Activated T-helper 2 cell treated with anti-CD3 and anti-CD28 coated beads, Interferon-gamma antibody, Interleukin-2, Interleukin-4, amounts not matched to agents 10 μg/mL and 5 μg/mL and 100 μg/mL, durations not matched to agents 14 hours and 24 hours and 36 hours (primary cell): ENCODE measurements at regions of chr10 and their contacts with region 1.

Region 1: DNA sequence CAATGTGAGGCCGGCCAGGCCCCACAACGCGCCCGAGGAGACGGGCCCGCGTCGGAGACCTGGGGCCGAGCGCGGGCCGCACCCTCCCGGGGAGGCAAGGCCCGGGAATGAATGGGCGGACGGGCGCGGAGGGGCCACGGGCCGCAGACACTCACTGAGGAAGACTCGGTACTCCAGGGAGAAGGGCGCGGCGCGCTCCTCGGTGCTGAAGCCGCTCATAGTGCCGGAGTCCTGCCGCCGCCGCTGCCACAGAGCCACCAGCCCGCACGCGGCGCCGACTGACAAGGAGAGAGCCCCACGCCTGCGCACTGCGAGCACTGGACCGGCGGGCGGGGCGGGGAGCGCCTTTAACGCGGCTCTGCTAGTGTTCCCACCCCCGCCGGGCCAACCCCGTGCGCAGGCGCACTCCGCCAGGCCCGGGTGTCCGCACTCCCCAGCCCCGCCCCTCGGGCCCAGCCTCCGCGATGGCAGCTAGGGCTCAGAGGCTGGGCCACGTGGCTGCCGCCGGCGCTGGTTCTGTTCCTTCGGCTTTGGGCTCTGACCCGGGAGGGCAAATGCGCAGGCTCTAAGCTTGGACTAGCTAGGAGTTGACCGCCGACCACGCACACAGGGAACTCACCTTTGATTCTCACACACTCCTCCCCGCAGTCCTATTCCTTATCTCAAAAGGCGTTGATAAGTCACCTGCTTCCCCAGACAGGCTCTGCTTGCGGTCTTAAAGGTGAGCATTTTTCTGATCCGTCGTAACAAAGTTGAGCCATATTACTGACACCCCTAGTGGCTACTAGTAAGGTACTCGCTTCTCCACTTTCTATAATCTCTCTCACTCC is at the start of gene PPA1:
- DNase-seq: peak; percentile 98
- H3K4me3 Mint-ChIP-seq: peak within 1 kb of the TSS; percentile 88
- H3K27ac Mint-ChIP-seq: peak within 1 kb of the TSS; percentile 85
- H3K4me1 Mint-ChIP-seq: peaks cover 30% of the 10 kb centered on the region
- H3K27me3 Mint-ChIP-seq: no peaks in the 10 kb centered on the region
- total RNA-seq, gene PPA1: 405 and 419 TPM in 2 replicates

Region 2: DNA sequence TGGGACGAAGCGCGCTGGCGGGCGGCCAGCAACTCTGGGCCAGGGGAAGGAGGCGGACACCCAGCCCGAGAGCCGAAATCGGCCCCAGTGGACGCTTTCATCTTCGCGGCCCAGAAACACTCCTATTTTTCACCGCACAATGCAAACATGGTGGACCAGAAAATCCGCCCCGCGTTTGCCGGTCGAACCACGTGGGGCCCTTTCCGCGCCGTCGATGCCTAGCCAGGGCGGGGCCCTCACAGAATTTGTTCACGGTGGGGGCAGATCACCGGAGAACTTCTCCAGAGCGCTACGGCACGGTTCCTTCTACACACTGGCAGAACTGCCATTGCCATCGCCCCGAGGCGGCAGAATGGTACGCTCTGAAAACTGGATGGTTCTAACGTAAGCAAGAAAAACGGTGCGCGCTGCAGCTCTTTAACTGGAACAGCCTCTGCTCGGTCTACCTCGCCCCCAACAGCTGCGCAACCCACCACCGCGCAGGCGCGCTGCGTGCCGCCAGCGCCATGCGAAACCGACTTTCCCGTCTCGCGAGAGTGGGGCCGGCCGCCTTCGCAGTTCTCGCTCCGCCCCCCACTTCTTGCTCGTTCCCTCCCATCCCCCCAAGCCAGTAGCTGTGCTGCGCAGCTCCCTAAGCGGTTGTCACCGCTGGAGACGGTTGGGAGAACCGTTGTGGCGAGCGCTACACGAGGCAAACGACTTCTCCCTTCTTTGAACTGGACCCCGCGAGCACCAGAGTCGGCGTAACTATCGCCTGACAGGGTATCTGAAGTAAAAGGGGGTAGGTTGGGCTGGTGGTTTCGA is 1901.7 kb before region 1 on chr10 and contains the start of gene HNRNPH3:
- intact Hi-C with region 1: loop called (anchors 5 kb)
- DNase-seq: peak; percentile 98
- H3K4me3 Mint-ChIP-seq: peak within 1 kb of the TSS; percentile 99
- H3K27ac Mint-ChIP-seq: peak within 1 kb of the TSS; percentile 100
- H3K4me1 Mint-ChIP-seq: peaks cover 45% of the 10 kb centered on the region
- H3K27me3 Mint-ChIP-seq: no peaks in the 10 kb centered on the region
- total RNA-seq, gene HNRNPH3: 172 and 183 TPM in 2 replicates

Region 3: GRCh38 chr10:70162892-70163201 is 70.5 kb before region 1 on chr10:
- intact Hi-C with region 1: loop called (anchors 2 kb)
- DNase-seq: peak; percentile 68
- H3K4me3 Mint-ChIP-seq: peak overlapping the region; percentile 53
- H3K27ac Mint-ChIP-seq: peak overlapping the region; percentile 88
- H3K4me1 Mint-ChIP-seq: peaks cover 60% of the 10 kb centered on the region
- H3K27me3 Mint-ChIP-seq: no peaks in the 10 kb centered on the region

Region 4: DNA sequence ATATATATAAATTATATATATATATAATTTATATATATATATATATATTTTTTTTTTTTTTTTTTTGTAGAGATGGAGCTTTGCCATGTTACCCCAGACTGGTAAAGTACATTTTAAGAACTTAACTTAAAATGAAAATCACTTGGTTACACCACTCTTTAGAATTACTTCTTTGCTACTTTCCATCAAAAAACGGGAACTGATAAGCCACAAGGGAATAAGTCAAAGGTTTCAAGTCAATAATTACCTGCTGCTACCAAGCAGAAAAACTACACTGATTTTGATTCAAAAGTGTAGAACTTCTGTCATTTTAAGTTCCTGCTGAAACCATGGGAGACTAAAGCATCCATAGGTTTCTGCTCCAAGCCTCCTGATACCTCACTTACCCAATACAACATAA is 12.3 kb before region 1 on chr10:
- intact Hi-C with region 1: loop called (anchors 1 kb)
- DNase-seq: no peak
- H3K4me3 Mint-ChIP-seq: peak overlapping the region; percentile 60
- H3K27ac Mint-ChIP-seq: no peak overlapping the region
- H3K4me1 Mint-ChIP-seq: peaks cover 32% of the 10 kb centered on the region
- H3K27me3 Mint-ChIP-seq: no peaks in the 10 kb centered on the region

Region 5: DNA sequence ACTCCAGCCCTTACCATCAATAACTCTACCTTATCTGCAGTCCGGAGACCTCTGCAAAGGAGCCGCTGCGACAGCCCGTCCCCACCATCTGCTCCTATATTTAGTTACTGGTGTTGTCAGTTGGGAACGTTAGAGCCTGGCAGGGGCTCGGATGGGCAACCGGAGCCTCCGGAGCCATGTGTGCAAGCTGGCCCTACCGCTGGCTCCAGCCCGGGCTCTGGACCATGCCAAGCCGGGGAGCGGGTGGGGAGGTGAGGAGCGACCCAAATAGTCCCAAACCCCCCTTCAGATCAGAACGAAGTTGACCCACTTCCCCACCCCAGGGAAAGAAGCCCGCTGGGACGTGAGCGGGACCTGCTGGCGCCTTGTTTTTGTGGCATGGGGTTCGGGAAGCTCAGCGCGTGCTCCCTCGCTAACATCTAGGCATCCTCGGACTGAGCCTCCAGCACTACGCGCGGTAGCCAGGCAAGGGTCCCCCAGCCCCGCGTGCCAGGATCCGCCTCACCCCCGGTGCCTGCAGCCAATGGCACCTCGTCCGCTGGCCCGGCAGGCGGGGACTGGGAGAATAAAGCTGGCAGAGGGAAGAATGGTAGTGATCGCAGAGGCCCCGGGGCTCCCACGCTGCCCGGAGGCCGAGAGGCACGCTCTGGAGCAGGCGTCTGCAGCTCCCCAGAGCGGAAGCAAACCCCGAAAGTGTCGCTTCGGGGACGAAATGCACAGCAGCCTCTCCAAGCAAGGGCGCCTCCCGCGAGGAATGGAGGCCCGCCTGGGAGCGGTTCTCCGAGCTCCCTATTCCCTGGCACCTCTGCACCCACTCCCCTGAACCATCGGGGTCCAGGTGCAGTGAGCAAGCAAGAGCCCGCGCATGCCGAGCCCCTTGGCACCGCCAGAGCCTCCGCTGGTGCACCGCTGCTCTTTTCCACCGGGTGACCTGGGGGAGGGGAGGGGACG is 148.4 kb after region 1 on chr10:
- intact Hi-C with region 1: loop called (anchors 1 kb)
- DNase-seq: peak; percentile 40
- H3K4me3 Mint-ChIP-seq: peak overlapping the region; percentile 85
- H3K27ac Mint-ChIP-seq: no peak overlapping the region
- H3K4me1 Mint-ChIP-seq: peaks cover 14% of the 10 kb centered on the region
- H3K27me3 Mint-ChIP-seq: no peaks in the 10 kb centered on the region

Region 6: DNA sequence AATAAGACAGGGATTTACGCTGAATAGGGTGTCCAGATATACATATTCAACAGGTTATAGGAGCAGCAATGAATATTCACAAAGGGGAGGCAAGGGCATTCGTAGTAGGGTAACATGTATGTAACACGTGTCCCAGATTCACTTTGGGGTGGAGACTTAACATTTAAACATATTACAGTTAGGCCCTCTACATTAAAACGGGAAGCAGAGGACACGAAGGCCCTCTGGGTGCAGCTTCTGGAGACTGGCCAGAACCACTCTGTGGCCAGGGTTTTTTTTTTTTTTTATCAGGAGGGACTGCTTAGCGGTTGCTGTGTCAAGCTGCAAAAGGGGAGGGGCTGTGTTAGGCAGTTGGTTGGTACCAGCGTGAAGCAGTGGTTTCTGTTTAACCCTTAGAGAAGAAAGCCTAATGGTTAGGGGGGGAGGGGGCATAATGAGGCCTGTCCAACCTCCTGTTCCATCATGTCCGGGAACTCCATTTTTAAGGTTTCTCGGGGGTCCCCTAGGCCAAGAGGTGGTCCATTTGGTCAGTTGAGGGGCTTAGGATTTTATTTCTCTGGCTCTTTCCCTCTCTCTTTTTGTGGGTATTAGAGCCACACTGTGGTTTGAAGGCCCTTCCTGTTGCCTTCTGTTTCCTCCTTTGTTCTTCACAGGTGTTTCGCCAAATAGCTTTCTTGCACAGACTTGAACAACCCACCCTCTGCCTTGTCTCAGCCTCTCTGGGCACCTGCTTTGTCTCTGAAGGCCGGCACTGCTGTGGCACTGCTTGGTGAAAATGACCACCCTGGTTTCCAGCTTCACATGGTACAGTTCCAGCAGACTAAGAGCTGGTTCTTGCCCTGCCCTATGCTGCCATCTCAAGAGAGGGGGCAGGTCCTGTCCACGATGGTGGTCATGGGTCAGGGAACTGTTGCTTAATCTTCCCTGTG is 342.8 kb after region 1 on chr10:
- intact Hi-C with region 1: loop called (anchors 1 kb)
- DNase-seq: no peak
- H3K4me3 Mint-ChIP-seq: no peak overlapping the region
- H3K27ac Mint-ChIP-seq: peak overlapping the region; percentile 93
- H3K4me1 Mint-ChIP-seq: peaks cover 47% of the 10 kb centered on the region
- H3K27me3 Mint-ChIP-seq: peaks cover 7% of the 10 kb centered on the region